MCF 10A (cell line): ENCODE measurements at regions of chr7 and their contacts with region 1.

Region 1: GRCh38 chr7:80134536-80135320 is at the start of gene GNAI1:
- DNase-seq: peak; percentile 89
- H3K4me3 Mint-ChIP-seq: peak within 1 kb of the TSS; percentile 98
- H3K27ac Mint-ChIP-seq: peak within 1 kb of the TSS; percentile 95
- H3K4me1 Mint-ChIP-seq: peaks cover 36% of the 10 kb centered on the region
- H3K27me3 Mint-ChIP-seq: no peaks in the 10 kb centered on the region
- CTCF ChIP-seq: peak; percentile 34
- total RNA-seq, gene GNAI1: 27.6 and 30.4 TPM in 2 replicates

Region 2: DNA sequence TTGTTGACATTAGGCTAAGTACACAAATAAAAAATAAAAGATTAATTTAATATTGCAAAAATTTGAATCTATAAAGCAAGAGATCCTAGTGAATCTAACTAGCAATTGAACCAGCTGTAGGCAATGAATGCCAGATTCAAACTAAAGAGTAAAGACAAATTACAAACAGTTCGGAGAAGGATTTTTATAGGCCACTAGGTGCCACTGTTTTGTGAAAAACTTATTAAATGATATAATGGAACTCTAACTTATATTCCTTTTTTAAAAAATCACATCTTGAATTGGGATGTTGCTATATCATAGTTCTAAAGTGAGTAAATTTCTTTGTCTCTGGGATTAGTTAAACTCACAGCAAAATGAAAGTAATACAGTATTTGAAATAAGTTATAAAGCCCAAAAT is 39.2 kb before region 1 on chr7:
- CTCF ChIA-PET with region 1: interaction called, 42 read pairs
- POLR2A ChIA-PET with region 1: interaction called, 5 read pairs
- intact Hi-C with region 1: loop called (anchors 1 kb)
- DNase-seq: peak; percentile 38
- H3K4me3 Mint-ChIP-seq: no peak overlapping the region
- H3K27ac Mint-ChIP-seq: no peak overlapping the region
- H3K4me1 Mint-ChIP-seq: no peaks in the 10 kb centered on the region
- H3K27me3 Mint-ChIP-seq: no peaks in the 10 kb centered on the region
- CTCF ChIP-seq: peak; percentile 37

Region 3: DNA sequence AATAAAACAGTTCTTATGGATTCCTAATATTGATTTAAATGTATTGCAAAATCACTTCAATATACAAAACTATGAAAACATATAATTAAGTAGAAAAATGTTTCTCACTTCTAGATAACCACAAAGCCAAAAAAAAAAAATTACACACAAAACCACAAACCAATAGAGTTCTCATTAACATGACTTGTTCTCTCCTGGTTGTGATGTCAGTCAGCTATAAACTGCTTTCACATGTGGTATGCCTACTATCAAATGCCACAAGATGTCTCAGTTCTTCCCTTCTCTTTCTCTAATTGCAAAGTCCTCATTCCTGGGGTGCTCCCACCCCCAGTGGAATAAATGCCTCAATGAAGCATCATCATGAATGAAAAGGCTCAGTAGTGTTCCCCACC is 16.5 kb after region 1 on chr7:
- CTCF ChIA-PET with region 1: interaction called, 8 read pairs
- POLR2A ChIA-PET with region 1: interaction called, 229 read pairs
- intact Hi-C with region 1: no loop called
- DNase-seq: peak; percentile 64
- H3K4me3 Mint-ChIP-seq: peak overlapping the region; percentile 70
- H3K27ac Mint-ChIP-seq: peak overlapping the region; percentile 95
- H3K4me1 Mint-ChIP-seq: peaks cover 43% of the 10 kb centered on the region
- H3K27me3 Mint-ChIP-seq: no peaks in the 10 kb centered on the region
- CTCF ChIP-seq: no peak

Region 4: GRCh38 chr7:80170445-80170844 is 35.7 kb after region 1 on chr7:
- CTCF ChIA-PET with region 1: no interaction called
- POLR2A ChIA-PET with region 1: no interaction called
- intact Hi-C with region 1: no loop called
- DNase-seq: no peak
- H3K4me3 Mint-ChIP-seq: no peak overlapping the region
- H3K27ac Mint-ChIP-seq: no peak overlapping the region
- H3K4me1 Mint-ChIP-seq: peaks cover 7% of the 10 kb centered on the region
- H3K27me3 Mint-ChIP-seq: no peaks in the 10 kb centered on the region
- CTCF ChIP-seq: no peak

Region 5: GRCh38 chr7:80218723-80219122 is 84.0 kb after region 1 on chr7:
- CTCF ChIA-PET with region 1: interaction called, 5 read pairs
- POLR2A ChIA-PET with region 1: interaction called, 20 read pairs
- intact Hi-C with region 1: loop called (anchors 2 kb)
- DNase-seq: peak; percentile 75
- H3K4me3 Mint-ChIP-seq: peak overlapping the region; percentile 24
- H3K27ac Mint-ChIP-seq: peak overlapping the region; percentile 85
- H3K4me1 Mint-ChIP-seq: peaks cover 23% of the 10 kb centered on the region
- H3K27me3 Mint-ChIP-seq: no peaks in the 10 kb centered on the region
- CTCF ChIP-seq: no peak

Region 6: DNA sequence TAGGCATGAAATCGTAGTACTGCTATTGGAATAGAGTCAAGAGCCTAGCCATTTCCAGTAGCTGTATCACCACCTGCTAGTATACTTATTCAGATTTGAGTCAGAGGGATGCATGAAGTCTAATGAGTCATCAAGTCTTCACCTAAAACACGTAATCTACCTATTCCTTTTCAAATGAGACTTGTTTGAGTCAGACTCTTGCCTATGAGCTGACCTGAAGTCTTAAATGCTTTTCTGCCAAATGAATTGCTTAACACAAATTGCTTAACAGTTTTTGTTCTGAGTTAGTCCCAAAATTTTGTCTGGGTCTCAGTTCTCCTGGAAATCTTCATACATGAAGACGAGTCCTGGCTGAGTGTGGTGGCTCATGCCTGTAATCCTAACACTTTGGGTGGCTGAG is 212.0 kb after region 1 on chr7:
- CTCF ChIA-PET with region 1: interaction called, 3 read pairs
- POLR2A ChIA-PET with region 1: interaction called, 13 read pairs
- intact Hi-C with region 1: no loop called
- DNase-seq: peak; percentile 96
- H3K4me3 Mint-ChIP-seq: peak overlapping the region; percentile 36
- H3K27ac Mint-ChIP-seq: peak overlapping the region; percentile 44
- H3K4me1 Mint-ChIP-seq: peaks cover 27% of the 10 kb centered on the region
- H3K27me3 Mint-ChIP-seq: no peaks in the 10 kb centered on the region
- CTCF ChIP-seq: no peak

Region 7: DNA sequence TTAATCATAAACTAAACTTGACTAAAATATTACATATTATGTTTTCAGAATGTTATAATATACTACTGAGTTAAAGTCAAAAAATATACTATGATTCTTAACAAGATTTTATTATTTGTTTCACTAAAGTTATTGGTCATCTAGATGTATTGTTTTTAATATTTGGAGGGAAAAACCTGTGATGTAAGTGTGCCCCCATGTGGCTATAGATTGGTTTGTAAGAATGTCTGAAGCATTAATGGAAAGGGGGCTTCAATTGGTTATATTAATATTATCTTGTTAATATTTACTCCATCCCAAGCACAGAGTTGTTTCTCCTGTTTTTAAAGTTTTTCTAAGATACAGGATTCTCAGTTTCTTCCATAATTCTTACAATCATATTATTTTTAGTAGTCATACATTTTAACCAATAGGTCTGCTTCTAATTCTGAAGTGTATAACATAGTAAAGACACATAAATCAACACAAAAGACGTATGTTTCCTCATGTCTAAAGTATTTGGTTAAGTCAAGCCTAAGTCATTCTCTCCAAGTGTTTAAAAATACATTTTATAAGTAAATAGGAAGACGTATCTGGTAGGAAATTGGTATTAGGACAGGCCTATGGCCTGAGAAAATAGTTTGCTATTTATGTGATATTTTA is 319.1 kb after region 1 on chr7:
- CTCF ChIA-PET with region 1: interaction called, 5 read pairs
- POLR2A ChIA-PET with region 1: no interaction called
- intact Hi-C with region 1: loop called (anchors 2 kb)
- DNase-seq: peak; percentile 43
- H3K4me3 Mint-ChIP-seq: no peak overlapping the region
- H3K27ac Mint-ChIP-seq: no peak overlapping the region
- H3K4me1 Mint-ChIP-seq: peaks cover 4% of the 10 kb centered on the region
- H3K27me3 Mint-ChIP-seq: no peaks in the 10 kb centered on the region
- CTCF ChIP-seq: peak; percentile 52